Colonic mucosa (tissue), 4 donors: ENCODE measurements at regions of chrX and their contacts with region 1.

Region 1: DNA sequence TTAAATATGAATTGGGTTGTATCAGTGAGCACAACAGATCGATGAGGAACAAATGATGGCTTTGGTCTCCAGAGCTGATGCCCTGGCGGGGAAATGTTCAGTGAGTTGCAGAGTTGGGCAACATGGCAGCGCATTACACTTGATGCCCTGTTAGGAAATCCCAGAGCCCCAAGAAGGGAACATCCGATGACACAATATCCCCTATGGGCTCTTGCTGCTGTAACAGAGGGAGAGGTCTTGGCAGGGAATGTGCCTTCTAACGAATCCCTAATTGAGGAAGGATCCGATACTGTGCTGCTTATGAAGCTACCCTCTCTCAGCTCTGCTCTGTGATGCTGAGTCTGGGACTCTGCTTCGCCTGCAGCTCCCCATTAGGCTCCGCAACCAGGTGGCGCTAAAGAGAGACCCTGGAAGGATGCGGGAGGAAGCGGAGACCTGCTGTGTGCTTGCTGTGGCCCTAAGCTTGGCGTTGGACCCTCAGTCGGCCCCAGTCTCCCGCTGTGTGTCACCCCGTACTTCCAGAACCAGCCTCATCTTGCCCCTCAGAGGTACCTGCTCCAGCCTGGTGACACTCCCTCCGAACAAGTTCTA is 38.9 kb downstream of the PDHA1 start:
- DNase-seq: peak; percentile 63
- H3K4me3 ChIP-seq: no peak overlapping the region
- H3K27ac ChIP-seq: no peak overlapping the region
- H3K4me1 ChIP-seq: no peaks in the 10 kb centered on the region
- H3K27me3 ChIP-seq: no peaks in the 10 kb centered on the region
- CTCF ChIP-seq: peak; percentile 40

Region 2: DNA sequence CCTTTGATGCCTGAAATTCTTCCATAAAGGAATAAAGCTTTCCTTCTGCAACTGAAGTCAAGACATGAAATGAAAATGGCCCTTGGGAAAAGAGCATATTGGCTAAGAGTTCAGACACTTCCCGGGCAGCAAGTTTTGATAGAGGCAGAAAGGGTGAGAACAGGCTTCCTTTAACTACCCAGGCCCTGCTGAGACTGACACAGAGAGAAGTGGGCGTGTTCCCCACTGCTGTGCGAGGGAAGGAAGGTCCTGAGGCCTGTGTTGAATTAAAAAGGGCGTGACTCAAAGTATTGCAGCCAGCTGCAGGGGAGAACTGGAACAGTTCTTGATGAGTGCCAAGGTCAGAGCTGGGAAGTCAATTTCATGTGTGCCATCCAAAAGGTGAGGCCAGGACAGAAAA is 226.5 kb before region 1 on chrX:
- intact Hi-C with region 1: no loop called
- DNase-seq: peak; percentile 21
- H3K4me3 ChIP-seq: no peak overlapping the region
- H3K27ac ChIP-seq: no peak overlapping the region
- H3K4me1 ChIP-seq: no peaks in the 10 kb centered on the region
- H3K27me3 ChIP-seq: no peaks in the 10 kb centered on the region
- CTCF ChIP-seq: no peak

Region 3: GRCh38 chrX:19514791-19515614 is 132.4 kb after region 1 on chrX and contains the start of gene MAP3K15:
- intact Hi-C with region 1: loop called (anchors 10 kb)
- DNase-seq: peak; percentile 23
- H3K4me3 ChIP-seq: peak within 1 kb of the TSS; percentile 29
- H3K27ac ChIP-seq: no peak within 1 kb of the TSS
- H3K4me1 ChIP-seq: no peaks in the 10 kb centered on the region
- H3K27me3 ChIP-seq: peaks cover 8% of the 10 kb centered on the region
- CTCF ChIP-seq: no peak
- total RNA-seq, gene MAP3K15: 0.25 TPM in 1 of 2 donors, not detected in the other

Region 4: GRCh38 chrX:20159797-20160385 is 777.2 kb after region 1 on chrX:
- intact Hi-C with region 1: no loop called
- DNase-seq: no peak
- H3K4me3 ChIP-seq: no peak overlapping the region
- H3K27ac ChIP-seq: no peak overlapping the region
- H3K4me1 ChIP-seq: no peaks in the 10 kb centered on the region
- H3K27me3 ChIP-seq: no peaks in the 10 kb centered on the region
- CTCF ChIP-seq: no peak